ENCODE measurements at regions of chr14 and their contacts with region 1.

Region 1: GRCh38 chr14:78697341-78697740 is 527.2 kb downstream of the NRXN3 start:
- DNase-seq: no peak
- H3K4me3 Mint-ChIP-seq: no peak overlapping the region
- H3K27ac Mint-ChIP-seq: no peak overlapping the region
- H3K4me1 Mint-ChIP-seq: no peaks in the 10 kb centered on the region
- H3K27me3 Mint-ChIP-seq: peaks cover 25% of the 10 kb centered on the region
- CTCF ChIP-seq: no peak

Region 2: GRCh38 chr14:78164238-78164853 is 533.0 kb before region 1 on chr14:
- CTCF ChIA-PET with region 1: no interaction called
- intact Hi-C with region 1: loop called (anchors 10 kb)
- DNase-seq: peak; percentile 64
- H3K4me3 Mint-ChIP-seq: no peak overlapping the region
- H3K27ac Mint-ChIP-seq: no peak overlapping the region
- H3K4me1 Mint-ChIP-seq: peaks cover 11% of the 10 kb centered on the region
- H3K27me3 Mint-ChIP-seq: peaks cover 90% of the 10 kb centered on the region
- CTCF ChIP-seq: peak; percentile 48

Region 3: DNA sequence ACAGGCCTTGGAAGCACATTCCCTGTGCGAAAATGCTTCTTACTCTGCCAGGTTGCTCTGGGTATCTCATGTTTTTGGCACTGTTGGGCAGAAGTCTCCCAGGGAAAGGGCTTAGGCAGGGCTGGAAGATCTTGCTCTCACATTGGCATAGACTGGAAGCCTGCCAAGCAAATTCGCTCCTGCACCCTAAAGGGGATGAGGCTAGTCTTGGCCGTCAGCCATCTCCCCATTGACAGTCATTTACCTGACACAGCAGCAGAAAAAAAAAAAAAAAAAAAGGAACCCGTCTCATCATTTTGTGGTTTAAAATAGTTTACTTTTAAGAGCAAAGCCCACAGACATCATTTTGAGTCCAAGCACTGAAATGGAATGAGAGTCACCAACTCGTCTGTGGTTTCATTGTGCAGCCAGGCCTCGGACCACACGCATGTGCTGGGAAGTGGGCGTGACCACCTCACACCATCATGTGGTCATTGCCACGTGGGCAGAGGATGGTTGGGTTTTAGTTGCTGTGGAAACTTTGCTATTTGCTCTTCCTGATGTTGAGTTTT is 442.4 kb before region 1 on chr14:
- CTCF ChIA-PET with region 1: no interaction called
- intact Hi-C with region 1: no loop called
- DNase-seq: peak; percentile 3
- H3K4me3 Mint-ChIP-seq: no peak overlapping the region
- H3K27ac Mint-ChIP-seq: no peak overlapping the region
- H3K4me1 Mint-ChIP-seq: no peaks in the 10 kb centered on the region
- H3K27me3 Mint-ChIP-seq: peaks cover 21% of the 10 kb centered on the region
- CTCF ChIP-seq: no peak

Region 4: DNA sequence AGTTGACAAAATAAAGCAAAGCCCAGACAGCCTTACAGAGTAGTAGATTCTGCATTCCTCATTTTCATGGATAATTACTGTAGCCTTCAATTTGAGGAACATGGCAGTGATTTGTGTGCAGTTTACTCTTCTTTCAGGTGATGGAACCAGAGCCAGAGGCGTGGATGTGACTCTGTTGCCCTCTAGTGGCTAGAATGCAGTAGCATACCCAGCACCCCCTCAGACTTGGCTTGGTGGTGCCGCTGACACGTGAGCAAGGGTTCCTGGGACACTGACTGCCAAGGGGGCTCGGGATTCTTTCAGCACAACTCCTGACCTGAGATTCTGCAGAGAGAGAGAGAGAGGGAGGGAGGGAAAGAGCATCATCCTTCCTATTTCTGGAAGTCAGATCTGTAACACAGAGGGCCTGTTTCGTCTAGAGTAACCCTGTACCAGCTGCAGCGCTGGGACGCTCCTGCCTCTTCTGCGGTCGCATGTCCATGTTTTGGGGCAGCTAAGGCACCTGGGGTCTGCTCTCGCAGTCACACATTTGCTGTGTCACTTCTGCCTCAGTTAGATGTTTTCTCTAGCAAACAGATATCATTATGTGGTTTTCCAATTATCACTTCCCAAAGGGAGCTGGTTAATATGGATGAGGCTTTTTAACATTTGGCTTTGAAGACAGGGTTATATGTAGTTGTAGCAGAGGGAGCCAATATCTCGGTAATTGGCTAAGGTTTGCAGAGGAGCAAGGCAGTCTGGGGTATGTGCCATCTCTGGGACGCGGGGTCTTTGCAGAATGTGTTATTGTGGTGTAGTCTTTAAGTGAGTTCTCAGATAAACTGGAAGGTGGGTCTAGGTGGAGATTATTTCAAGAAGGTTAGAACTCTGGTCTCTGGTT is 99.1 kb before region 1 on chr14:
- CTCF ChIA-PET with region 1: interaction called, 4 read pairs
- intact Hi-C with region 1: loop called (anchors 1 kb)
- DNase-seq: peak; percentile 61
- H3K4me3 Mint-ChIP-seq: peak overlapping the region; percentile 8
- H3K27ac Mint-ChIP-seq: no peak overlapping the region
- H3K4me1 Mint-ChIP-seq: no peaks in the 10 kb centered on the region
- H3K27me3 Mint-ChIP-seq: peaks cover 75% of the 10 kb centered on the region
- CTCF ChIP-seq: peak; percentile 86

Region 5: DNA sequence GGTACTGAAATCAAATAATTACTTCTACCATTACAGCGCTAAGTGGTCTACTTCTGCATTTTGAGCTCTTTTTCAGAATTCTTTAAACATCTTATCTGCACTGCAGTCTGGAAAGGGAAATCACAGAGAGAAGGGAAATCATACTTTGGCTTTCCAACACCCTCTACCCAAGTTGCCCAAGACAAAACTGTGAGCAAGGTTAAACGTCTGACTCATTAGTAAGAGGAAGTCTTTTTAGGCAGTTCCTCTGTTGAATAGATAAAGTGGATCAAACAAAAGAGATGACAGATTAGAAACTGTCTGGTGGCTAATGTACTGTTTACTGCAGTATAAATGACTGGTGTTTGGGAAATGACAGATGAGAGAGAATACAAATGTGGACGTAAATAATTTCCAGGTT is 330.9 kb after region 1 on chr14:
- CTCF ChIA-PET with region 1: no interaction called
- intact Hi-C with region 1: no loop called
- DNase-seq: no peak
- H3K4me3 Mint-ChIP-seq: no peak overlapping the region
- H3K27ac Mint-ChIP-seq: no peak overlapping the region
- H3K4me1 Mint-ChIP-seq: no peaks in the 10 kb centered on the region
- H3K27me3 Mint-ChIP-seq: no peaks in the 10 kb centered on the region
- CTCF ChIP-seq: no peak